Activated naive CD4-positive, alpha-beta T cell treated with anti-CD3 and anti-CD28 coated beads for 36 hours (primary cell): ENCODE measurements at regions of chr11 and their contacts with region 1.

Region 1: GRCh38 chr11:93543292-93543977 is at the start of gene SMCO4:
- DNase-seq: peak; percentile 84
- H3K4me3 Mint-ChIP-seq: peak within 1 kb of the TSS; percentile 87
- H3K27ac Mint-ChIP-seq: peak within 1 kb of the TSS; percentile 82
- H3K4me1 Mint-ChIP-seq: peaks cover 20% of the 10 kb centered on the region
- H3K27me3 Mint-ChIP-seq: no peaks in the 10 kb centered on the region
- total RNA-seq, gene SMCO4: 23.7 to 26.8 TPM

Region 2: GRCh38 chr11:92941676-92942571 is 601.5 kb before region 1 on chr11:
- CTCF ChIA-PET with region 1: interaction called, 4 read pairs
- intact Hi-C with region 1: loop called (anchors 5 kb)
- DNase-seq: peak; percentile 27
- H3K4me3 Mint-ChIP-seq: no peak overlapping the region
- H3K27ac Mint-ChIP-seq: no peak overlapping the region
- H3K4me1 Mint-ChIP-seq: no peaks in the 10 kb centered on the region
- H3K27me3 Mint-ChIP-seq: peaks cover 22% of the 10 kb centered on the region

Region 3: DNA sequence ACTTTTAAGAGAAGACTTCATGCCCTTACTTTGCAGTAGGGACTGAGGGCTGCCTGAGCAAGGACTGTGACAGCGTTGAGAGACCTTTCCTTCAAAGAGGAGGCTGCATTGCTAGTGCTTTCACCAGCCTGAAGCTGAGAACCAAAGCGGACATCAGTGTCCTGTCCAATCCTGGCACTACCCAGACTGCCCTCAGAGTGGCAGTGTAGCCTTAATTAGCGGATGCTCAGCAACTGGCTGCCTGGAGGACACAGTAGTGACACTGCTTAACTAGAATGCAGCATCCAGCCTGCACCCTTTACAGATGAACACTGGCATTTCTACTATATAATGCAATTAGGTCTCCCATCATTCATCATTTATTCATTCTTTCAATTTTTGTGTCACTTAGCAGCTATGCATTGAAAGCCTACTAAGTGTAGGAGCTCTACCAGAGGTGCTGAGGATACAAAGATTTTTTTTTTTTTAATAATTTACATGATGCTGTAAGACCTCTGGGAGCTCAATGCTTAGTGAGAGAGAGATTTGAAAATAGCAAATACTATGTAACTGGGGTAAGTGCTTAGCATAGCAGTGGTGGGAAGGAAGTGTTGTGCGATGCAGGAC is 308.7 kb before region 1 on chr11:
- CTCF ChIA-PET with region 1: interaction called, 14 read pairs
- intact Hi-C with region 1: loop called (anchors 1 kb)
- DNase-seq: peak; percentile 84
- H3K4me3 Mint-ChIP-seq: no peak overlapping the region
- H3K27ac Mint-ChIP-seq: no peak overlapping the region
- H3K4me1 Mint-ChIP-seq: no peaks in the 10 kb centered on the region
- H3K27me3 Mint-ChIP-seq: peaks cover 21% of the 10 kb centered on the region

Region 4: DNA sequence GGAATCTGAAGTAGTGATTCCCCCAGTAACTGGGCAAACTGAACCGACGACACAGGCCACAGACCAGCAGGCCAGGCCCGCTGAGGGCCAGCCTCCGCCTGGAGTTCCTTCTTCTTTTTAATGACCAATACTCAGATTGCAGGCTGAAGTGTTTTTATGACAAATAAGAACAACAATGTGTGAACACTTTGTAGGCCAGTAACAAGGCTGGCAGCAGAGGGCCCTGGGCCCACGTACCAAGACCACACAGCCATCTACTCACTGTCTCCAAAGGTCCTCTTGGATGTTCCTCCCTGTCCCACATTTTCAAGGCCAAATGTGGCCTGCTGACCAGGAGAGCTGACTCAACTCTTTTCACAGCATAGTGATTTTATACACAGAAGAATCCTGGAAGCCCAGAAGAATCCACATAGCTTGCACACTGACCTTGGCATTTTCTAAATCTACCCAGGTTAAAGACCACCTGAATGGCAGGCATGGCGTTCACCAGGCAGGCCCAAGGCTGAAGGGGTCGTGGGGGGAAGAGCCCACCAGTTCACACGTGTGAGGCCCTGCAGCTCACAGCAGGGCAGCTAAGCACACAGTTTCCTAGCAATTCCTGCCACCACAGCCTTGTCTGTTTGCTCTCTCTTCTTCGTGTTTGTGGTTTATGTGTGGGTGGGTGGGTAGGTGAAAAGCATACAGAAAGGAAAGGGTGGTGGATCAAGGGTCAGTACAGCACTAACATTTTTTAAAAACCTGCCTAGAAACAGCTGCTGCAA is 13.5 kb before region 1 on chr11:
- CTCF ChIA-PET with region 1: no interaction called
- intact Hi-C with region 1: no loop called
- DNase-seq: no peak
- H3K4me3 Mint-ChIP-seq: no peak overlapping the region
- H3K27ac Mint-ChIP-seq: peak overlapping the region; percentile 20
- H3K4me1 Mint-ChIP-seq: peaks cover 39% of the 10 kb centered on the region
- H3K27me3 Mint-ChIP-seq: no peaks in the 10 kb centered on the region

Region 5: DNA sequence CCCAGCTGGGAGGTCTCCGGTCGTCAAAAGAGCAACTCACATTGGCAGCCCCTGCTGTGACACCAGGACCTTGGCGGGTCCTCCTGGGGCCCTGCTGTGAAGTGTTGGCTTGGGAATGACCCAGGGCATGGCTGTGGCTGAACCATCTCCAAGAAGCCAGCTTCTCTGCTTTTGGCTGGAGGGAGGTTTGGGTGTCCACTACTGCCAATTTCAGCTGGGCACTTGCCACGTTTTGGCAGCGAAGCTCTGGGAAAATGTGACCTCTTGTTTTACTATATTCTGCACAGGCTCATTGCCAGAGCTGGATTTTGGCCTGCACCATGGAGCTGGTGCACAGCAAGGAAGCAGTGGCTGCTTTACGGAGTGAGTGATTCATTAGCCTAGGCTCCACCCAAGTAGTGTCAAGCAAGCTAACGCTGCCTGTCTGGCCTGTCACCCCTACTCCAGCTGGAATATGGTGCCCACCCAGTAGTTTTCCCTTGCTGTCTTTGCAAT is 24.0 kb after region 1 on chr11:
- CTCF ChIA-PET with region 1: no interaction called
- intact Hi-C with region 1: no loop called
- DNase-seq: no peak
- H3K4me3 Mint-ChIP-seq: no peak overlapping the region
- H3K27ac Mint-ChIP-seq: no peak overlapping the region
- H3K4me1 Mint-ChIP-seq: no peaks in the 10 kb centered on the region
- H3K27me3 Mint-ChIP-seq: no peaks in the 10 kb centered on the region

Region 6: GRCh38 chr11:93662177-93662575 is 118.7 kb after region 1 on chr11:
- CTCF ChIA-PET with region 1: no interaction called
- intact Hi-C with region 1: loop called (anchors 1 kb)
- DNase-seq: no peak
- H3K4me3 Mint-ChIP-seq: peak overlapping the region; percentile 84
- H3K27ac Mint-ChIP-seq: peak overlapping the region; percentile 93
- H3K4me1 Mint-ChIP-seq: peaks cover 43% of the 10 kb centered on the region
- H3K27me3 Mint-ChIP-seq: no peaks in the 10 kb centered on the region

Region 7: GRCh38 chr11:94128746-94129511 is 585.5 kb after region 1 on chr11 and contains the start of gene PANX1:
- CTCF ChIA-PET with region 1: no interaction called
- intact Hi-C with region 1: loop called (anchors 5 kb)
- DNase-seq: peak; percentile 71
- H3K4me3 Mint-ChIP-seq: no peak within 1 kb of the TSS
- H3K27ac Mint-ChIP-seq: peak within 1 kb of the TSS; percentile 88
- H3K4me1 Mint-ChIP-seq: peaks cover 21% of the 10 kb centered on the region
- H3K27me3 Mint-ChIP-seq: no peaks in the 10 kb centered on the region
- total RNA-seq, gene PANX1: 5.4 to 5.8 TPM